Sigmoid colon (tissue), 7 donors: ENCODE measurements at regions of chr13 and their contacts with region 1.

Region 1: GRCh38 chr13:35789335-35790165 is 313.1 kb upstream of the MAB21L1 start:
- DNase-seq: no peak
- H3K4me3 ChIP-seq: no peak overlapping the region
- H3K27ac ChIP-seq: no peak overlapping the region
- H3K4me1 ChIP-seq: peaks cover 0 to 48% (median 39%) of the 10 kb centered on the region in 4 donors
- H3K27me3 ChIP-seq: no peaks in the 10 kb centered on the region
- CTCF ChIP-seq: peak in 3 of 4 experiments; percentile 47 to 60 (median 56)
- EP300 ChIP-seq: no peak
- POLR2A ChIP-seq: no peak

Region 2: DNA sequence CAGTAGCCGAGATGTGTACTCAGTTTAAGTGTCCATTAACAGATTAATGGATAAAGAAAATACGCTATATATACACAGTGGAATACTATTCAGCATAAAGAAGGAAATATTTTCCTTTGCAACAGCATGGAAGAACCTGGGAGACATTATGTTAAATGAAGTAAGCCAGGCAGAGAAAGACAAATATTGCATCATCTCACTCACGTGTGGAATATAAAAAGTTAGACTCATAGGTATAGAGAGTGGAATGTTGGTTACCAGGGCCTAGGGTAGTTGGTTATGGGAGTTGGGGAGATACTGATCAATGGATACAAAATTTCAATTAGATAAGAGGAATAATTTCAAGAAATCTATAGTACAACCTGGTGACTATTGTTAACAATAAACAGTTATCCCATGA is 523.1 kb before region 1 on chr13:
- intact Hi-C with region 1: no loop called
- DNase-seq: no peak
- H3K4me3 ChIP-seq: no peak overlapping the region
- H3K27ac ChIP-seq: no peak overlapping the region
- H3K4me1 ChIP-seq: no peaks in the 10 kb centered on the region
- H3K27me3 ChIP-seq: no peaks in the 10 kb centered on the region
- CTCF ChIP-seq: no peak
- EP300 ChIP-seq: no peak
- POLR2A ChIP-seq: no peak

Region 3: GRCh38 chr13:35630551-35631275 is 158.8 kb before region 1 on chr13:
- intact Hi-C with region 1: loop called (anchors 5 kb)
- DNase-seq: no peak
- H3K4me3 ChIP-seq: no peak overlapping the region
- H3K27ac ChIP-seq: no peak overlapping the region
- H3K4me1 ChIP-seq: peaks cover 0 to 4% (median 0%) of the 10 kb centered on the region in 4 donors
- H3K27me3 ChIP-seq: no peaks in the 10 kb centered on the region
- CTCF ChIP-seq: peak; percentile 39 to 70 (median 58)
- EP300 ChIP-seq: no peak
- POLR2A ChIP-seq: no peak